ENCODE measurements at regions of chr5 and their contacts with region 1.

Region 1: DNA sequence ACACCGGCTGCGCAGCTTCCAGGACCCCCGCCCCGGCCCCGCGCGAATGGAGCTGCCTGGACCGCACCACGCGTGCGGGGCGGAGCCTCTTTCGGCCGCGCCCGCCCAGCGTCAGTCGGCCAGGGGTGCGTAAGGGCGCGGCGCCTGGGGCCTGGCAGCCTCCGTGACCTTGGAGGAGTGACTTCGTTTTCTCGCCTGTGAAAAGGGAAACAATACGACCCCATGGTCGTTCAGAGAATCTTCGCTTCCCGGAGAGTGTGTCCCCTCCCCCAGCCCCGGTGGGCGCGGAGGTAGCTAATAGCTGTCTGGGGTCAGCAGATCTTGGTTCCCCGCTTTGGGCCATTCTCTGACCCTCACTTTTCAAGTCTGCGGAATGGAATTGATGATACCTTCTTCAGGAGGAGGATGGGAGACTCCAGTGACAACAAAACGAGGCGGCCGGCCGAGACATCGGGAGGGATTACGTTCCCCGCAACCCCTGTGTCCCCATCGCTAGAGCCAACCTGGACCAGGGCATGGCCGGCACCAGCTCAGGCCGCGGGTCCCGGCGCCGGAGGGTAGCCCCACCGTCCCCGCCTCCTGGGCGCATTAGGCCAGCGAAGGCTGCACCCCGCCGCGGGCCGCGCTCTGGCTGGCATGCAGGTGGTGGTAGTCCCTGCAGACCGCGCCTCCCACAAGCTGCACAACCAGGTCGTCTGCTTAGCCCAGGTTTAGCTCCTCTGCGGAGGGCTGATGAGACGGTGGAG is 5.5 kb upstream of the CDHR2 start:
- DNase-seq: peak; percentile 60 to 84 (median 72)
- ATAC-seq: peak; percentile 79
- H3K4me3 ChIP-seq: peak overlapping the region; percentile 75
- H3K4me3 Mint-ChIP-seq: peak overlapping the region; percentile 90 to 96 (median 94)
- H3K27ac ChIP-seq: peak overlapping the region; percentile 88
- H3K27ac Mint-ChIP-seq: peak overlapping the region; percentile 80 to 97 (median 94)
- H3K4me1 ChIP-seq: peaks cover 46 to 51% of the 10 kb centered on the region in 2 donors
- H3K4me1 Mint-ChIP-seq: peaks cover 41 to 76% (median 69%) of the 10 kb centered on the region in 7 donors
- H3K27me3 ChIP-seq: no peaks in the 10 kb centered on the region
- H3K27me3 Mint-ChIP-seq: no peaks in the 10 kb centered on the region

Region 2: DNA sequence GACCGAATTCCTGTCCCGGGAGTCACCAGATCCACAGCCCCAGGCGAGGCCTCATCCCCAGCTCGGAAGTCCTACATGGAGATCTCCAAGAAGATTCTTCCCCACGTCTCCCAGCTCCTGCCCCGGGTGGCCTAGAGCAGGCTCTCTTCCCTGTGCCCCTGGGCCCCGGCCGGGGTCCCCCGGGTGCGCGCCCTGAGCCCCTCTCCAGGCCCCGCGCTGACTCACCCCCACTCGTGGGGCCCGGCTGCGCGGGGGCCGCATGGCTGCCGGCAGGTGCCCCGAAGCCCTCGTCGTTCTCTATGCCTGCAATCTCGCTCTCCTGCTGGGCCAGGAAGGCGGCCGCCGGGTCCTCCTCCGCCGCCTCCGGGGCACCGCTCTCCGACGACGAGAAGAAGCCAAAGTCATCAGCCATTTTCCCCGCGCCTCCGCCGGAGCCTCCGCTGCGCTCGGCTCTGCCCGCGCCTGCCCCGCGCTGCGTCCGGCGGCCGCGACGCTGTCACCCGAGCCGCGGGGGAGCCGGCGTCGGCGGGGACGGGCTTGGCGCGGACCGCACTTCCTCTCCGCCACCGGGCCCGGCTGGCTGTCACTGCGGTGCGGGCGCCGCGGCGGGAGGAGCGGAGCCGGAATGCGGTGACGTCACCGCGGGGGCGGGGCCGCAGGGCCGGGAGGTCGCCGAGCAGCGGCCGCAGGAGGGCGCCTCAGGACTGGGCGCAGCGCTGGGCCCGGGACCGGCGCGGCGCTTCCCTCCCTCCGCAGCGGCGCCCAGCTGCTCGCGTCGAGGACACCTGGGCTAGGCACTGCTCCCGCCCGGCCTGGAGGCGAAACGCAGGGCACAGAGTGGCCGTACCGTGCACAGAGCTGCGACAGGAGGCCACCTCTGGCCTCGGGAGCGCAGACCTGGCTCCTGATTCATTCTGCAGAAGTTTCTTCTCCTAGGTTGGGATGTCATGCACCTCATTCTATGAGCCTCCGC is 127.4 kb before region 1 on chr5 and contains the start of gene CLTB:
- CTCF ChIA-PET with region 1: interaction called, 15 read pairs
- POLR2A ChIA-PET with region 1: interaction called, 9 read pairs
- intact Hi-C with region 1: loop called in 1 of 2 experiments (anchors 1 kb)
- DNase-seq: peak; percentile 73 to 86 (median 84)
- ATAC-seq: peak; percentile 97
- H3K4me3 ChIP-seq: peak within 1 kb of the TSS; percentile 52
- H3K4me3 Mint-ChIP-seq: peak within 1 kb of the TSS; percentile 74 to 89 (median 84)
- H3K27ac ChIP-seq: peak within 1 kb of the TSS; percentile 86
- H3K27ac Mint-ChIP-seq: peak within 1 kb of the TSS; percentile 71 to 91 (median 87)
- H3K4me1 ChIP-seq: peaks cover 21 to 28% of the 10 kb centered on the region in 2 donors
- H3K4me1 Mint-ChIP-seq: peaks cover 17 to 53% (median 47%) of the 10 kb centered on the region in 7 donors
- H3K27me3 ChIP-seq: no peaks in the 10 kb centered on the region
- H3K27me3 Mint-ChIP-seq: peaks cover 0 to 19% (median 0%) of the 10 kb centered on the region in 5 donors
- total RNA-seq, gene CLTB: 30.6 to 67.2 (median 63.8) TPM

Region 3: GRCh38 chr5:176530983-176531821 is 12.4 kb before region 1 on chr5:
- CTCF ChIA-PET with region 1: interaction called, 14 read pairs
- POLR2A ChIA-PET with region 1: interaction called, 251 read pairs
- intact Hi-C with region 1: loop called (anchors 1 kb)
- DNase-seq: peak in 1 of 9 donors; percentile 23
- ATAC-seq: no peak
- H3K4me3 ChIP-seq: peak overlapping the region; percentile 20
- H3K4me3 Mint-ChIP-seq: peak overlapping the region; percentile 71 to 99 (median 82)
- H3K27ac ChIP-seq: peak overlapping the region; percentile 96
- H3K27ac Mint-ChIP-seq: peak overlapping the region; percentile 79 to 97 (median 89)
- H3K4me1 ChIP-seq: peaks cover 55 to 59% of the 10 kb centered on the region in 2 donors
- H3K4me1 Mint-ChIP-seq: peaks cover 32 to 55% (median 45%) of the 10 kb centered on the region in 7 donors
- H3K27me3 ChIP-seq: no peaks in the 10 kb centered on the region
- H3K27me3 Mint-ChIP-seq: no peaks in the 10 kb centered on the region

Region 4: DNA sequence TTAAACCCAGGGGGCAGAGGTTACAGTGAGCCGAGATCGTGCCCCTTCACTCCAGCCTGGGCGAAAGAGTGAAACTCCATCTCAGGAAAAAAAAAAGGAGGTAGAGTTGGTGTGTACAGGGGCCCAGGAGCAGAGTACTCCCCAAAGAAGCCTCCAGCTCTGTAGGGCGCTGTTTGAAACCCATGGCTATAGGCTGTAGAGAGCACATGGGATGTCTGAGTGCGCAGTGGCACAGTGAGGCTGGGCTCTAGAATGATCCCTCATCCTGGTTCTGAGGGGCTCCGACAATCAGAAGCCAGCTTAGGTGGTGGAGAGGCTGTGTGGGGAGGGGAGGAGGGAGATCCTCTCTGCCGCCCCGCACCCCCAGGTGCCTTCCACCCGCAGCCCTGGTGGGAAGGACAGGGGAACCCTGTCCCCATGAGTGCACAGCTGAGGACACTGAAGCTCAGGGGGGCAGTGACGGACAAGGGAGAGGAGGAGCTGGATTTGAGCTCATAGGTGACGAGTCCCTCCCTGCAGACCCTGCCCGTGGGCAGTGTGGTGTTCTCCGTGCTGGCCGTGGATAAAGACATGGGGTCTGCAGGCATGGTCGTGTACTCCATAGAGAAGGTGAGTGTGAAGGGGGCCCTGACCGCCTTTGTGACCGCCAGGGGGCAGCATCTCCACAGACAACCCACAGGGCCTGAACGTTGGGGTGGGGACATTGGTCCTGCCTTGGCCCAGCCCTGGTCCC is 30.1 kb after region 1 on chr5:
- CTCF ChIA-PET with region 1: interaction called, 8 read pairs
- POLR2A ChIA-PET with region 1: interaction called, 3 read pairs
- intact Hi-C with region 1: loop called in 1 of 2 experiments (anchors 1 kb)
- DNase-seq: peak; percentile 48 to 80 (median 67)
- ATAC-seq: peak; percentile 88
- H3K4me3 ChIP-seq: no peak overlapping the region
- H3K4me3 Mint-ChIP-seq: no peak overlapping the region
- H3K27ac ChIP-seq: no peak overlapping the region
- H3K27ac Mint-ChIP-seq: peak overlapping the region in 1 of 9 donors; percentile 46
- H3K4me1 ChIP-seq: no peaks in the 10 kb centered on the region
- H3K4me1 Mint-ChIP-seq: peaks cover 0 to 11% (median 6%) of the 10 kb centered on the region in 7 donors
- H3K27me3 ChIP-seq: no peaks in the 10 kb centered on the region
- H3K27me3 Mint-ChIP-seq: peaks cover 0 to 4% (median 0%) of the 10 kb centered on the region in 5 donors